Activated CD4-positive, alpha-beta memory T cell treated with anti-CD3 and anti-CD28 coated beads for 36 hours (primary cell): ENCODE measurements at regions of chr12 and their contacts with region 1.

Region 1: GRCh38 chr12:48165094-48165981 is 8.0 kb upstream of the ASB8 start:
- DNase-seq: peak; percentile 49
- H3K4me3 Mint-ChIP-seq: no peak overlapping the region
- H3K27ac Mint-ChIP-seq: peak overlapping the region; percentile 3
- H3K4me1 Mint-ChIP-seq: no peaks in the 10 kb centered on the region
- H3K27me3 Mint-ChIP-seq: peaks cover 4% of the 10 kb centered on the region

Region 2: DNA sequence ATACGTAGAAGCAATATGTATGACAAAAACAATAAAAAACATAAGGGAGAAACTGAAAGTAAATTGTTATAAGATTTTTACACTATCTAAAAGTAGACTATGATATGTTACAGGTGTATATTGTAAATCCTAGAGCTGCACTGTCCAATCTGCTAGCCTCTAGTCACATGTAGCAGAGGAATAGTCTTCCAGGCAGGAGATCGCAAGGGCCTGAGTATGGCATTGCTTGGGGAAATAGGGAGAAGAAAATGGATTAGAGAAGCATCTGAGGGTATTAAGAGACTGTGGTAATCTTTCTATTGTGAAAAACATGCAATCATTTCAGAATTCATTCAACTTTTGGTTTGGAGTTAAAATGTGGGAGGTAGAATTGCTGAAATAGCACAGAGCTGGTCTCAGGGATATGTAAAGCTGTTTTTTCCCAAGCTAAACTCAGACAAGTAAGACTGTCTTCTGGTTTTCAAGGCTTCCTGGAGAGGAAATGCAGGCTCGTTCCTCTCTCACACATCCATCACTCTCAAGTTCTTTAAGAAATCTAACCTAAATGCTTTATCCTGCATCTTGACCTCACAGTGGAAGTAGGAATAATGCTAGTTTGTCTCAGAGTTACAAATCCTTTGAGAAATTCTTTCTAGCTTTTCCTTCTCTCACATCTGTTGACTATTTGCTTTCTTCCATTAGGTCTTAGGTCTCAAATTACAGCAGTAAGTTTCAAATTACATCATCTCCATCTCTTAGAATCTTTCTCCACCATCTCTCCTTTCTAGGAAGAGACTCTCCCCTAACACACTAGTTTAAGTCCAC is 10.5 kb after region 1 on chr12:
- CTCF ChIA-PET with region 1: interaction called, 11 read pairs
- POLR2A ChIA-PET with region 1: no interaction called
- intact Hi-C with region 1: no loop called
- DNase-seq: no peak
- H3K4me3 Mint-ChIP-seq: no peak overlapping the region
- H3K27ac Mint-ChIP-seq: no peak overlapping the region
- H3K4me1 Mint-ChIP-seq: peaks cover 9% of the 10 kb centered on the region
- H3K27me3 Mint-ChIP-seq: peaks cover 3% of the 10 kb centered on the region

Region 3: DNA sequence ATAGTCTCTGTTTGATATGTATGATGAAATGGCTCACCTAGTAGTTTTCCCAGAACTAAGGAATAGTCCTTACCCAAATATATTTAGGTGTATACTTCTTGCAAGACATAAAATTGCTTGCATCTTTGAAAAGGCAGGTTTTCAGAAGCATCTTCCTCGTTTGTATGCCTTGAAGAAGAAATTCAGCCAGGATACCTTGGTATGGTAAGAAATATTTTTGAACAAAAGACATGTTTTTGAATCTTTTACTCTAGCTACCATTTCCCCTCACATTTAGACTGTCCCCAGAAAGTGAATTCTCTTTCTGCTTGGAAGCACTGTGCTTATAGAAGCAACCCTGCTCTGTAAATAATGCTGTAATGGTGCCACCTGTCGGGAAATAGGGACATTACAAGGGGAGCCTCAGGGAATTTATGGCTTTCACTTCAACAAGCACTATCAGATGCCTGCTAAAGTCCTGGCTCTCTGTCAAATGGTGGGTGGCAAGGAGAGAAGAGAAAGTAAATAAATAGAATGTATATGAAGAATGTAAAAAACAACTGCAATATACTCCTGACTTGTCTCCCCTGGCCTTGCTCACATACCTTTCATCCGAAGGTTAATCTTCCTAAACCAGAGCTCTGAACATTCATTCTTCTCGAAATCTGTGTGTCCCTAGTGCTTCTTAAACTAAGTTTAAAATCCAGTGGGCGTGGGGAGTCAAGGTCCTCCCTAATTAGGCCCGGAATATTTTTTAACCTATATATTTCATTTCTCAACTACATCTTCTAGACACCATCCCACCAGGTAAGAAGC is 24.2 kb after region 1 on chr12:
- CTCF ChIA-PET with region 1: interaction called, 12 read pairs
- POLR2A ChIA-PET with region 1: no interaction called
- intact Hi-C with region 1: no loop called
- DNase-seq: peak; percentile 79
- H3K4me3 Mint-ChIP-seq: no peak overlapping the region
- H3K27ac Mint-ChIP-seq: no peak overlapping the region
- H3K4me1 Mint-ChIP-seq: peaks cover 5% of the 10 kb centered on the region
- H3K27me3 Mint-ChIP-seq: peaks cover 26% of the 10 kb centered on the region